ENCODE measurements at regions of chr12 and their contacts with region 1.

Region 1: DNA sequence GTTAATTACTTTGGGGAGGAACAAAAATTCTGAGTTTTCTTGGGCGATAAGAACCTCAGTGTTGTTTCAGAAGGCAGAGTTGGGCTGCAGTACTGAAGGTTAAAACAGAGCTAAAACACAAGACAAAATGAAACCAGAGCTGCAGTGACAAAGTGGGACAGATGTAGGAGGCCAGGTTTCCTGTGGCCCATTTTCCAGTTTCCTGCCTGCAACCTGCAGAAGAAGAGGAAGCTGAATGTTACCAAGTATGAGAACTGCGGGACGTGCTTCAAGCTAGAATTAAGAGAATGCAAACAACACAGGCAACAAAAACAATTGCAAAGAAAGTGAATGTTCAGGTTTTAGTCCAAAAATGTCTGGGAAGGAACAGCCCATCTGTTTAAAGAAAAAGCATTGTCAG is 17.8 kb downstream of the ELK3 start:
- H3K4me3 Mint-ChIP-seq: no peak overlapping the region
- H3K27ac Mint-ChIP-seq: no peak overlapping the region
- H3K4me1 Mint-ChIP-seq: peaks cover 76% of the 10 kb centered on the region
- H3K27me3 Mint-ChIP-seq: no peaks in the 10 kb centered on the region

Region 2: GRCh38 chr12:96015672-96016071 is 196.3 kb before region 1 on chr12:
- intact Hi-C with region 1: loop called (anchors 5 kb)
- H3K4me3 Mint-ChIP-seq: no peak overlapping the region
- H3K27ac Mint-ChIP-seq: no peak overlapping the region
- H3K4me1 Mint-ChIP-seq: peaks cover 12% of the 10 kb centered on the region
- H3K27me3 Mint-ChIP-seq: no peaks in the 10 kb centered on the region

Region 3: GRCh38 chr12:96094201-96094600 is 117.8 kb before region 1 on chr12:
- intact Hi-C with region 1: no loop called
- H3K4me3 Mint-ChIP-seq: no peak overlapping the region
- H3K27ac Mint-ChIP-seq: no peak overlapping the region
- H3K4me1 Mint-ChIP-seq: peaks cover 18% of the 10 kb centered on the region
- H3K27me3 Mint-ChIP-seq: no peaks in the 10 kb centered on the region

Region 4: DNA sequence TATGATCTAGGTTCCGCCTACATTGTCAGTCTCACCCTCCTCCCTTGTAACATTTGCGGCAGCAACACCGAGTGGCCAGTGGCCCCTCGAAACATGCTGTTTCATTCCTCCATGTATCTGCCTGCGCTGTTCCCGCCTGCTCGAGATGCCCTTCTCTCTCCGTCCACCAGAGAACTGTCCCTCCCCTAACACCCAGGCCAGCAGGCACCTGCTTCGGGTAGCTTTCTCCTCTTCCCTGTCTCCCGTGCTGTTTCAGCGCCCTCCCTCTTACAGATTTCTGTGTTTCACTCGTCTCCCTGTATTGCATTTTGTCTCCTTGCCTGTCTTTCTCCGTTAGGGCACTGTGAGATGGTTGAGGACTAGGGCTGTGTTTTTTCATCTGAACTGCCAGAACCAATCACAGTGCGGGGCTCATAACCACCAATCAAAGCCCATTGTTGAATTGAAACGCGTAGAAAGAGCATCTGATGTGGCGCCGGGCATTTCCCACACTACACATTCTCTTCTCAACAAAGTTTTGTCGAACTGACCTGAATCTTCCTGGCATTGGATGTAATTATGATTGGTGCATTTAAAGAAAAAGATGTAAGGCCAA is 58.8 kb before region 1 on chr12:
- intact Hi-C with region 1: no loop called
- H3K4me3 Mint-ChIP-seq: no peak overlapping the region
- H3K27ac Mint-ChIP-seq: no peak overlapping the region
- H3K4me1 Mint-ChIP-seq: no peaks in the 10 kb centered on the region
- H3K27me3 Mint-ChIP-seq: peaks cover 2% of the 10 kb centered on the region

Region 5: GRCh38 chr12:96375841-96376604 is 164.0 kb after region 1 on chr12:
- intact Hi-C with region 1: no loop called
- H3K4me3 Mint-ChIP-seq: peak overlapping the region; percentile 26
- H3K27ac Mint-ChIP-seq: peak overlapping the region; percentile 43
- H3K4me1 Mint-ChIP-seq: peaks cover 47% of the 10 kb centered on the region
- H3K27me3 Mint-ChIP-seq: no peaks in the 10 kb centered on the region

Region 6: DNA sequence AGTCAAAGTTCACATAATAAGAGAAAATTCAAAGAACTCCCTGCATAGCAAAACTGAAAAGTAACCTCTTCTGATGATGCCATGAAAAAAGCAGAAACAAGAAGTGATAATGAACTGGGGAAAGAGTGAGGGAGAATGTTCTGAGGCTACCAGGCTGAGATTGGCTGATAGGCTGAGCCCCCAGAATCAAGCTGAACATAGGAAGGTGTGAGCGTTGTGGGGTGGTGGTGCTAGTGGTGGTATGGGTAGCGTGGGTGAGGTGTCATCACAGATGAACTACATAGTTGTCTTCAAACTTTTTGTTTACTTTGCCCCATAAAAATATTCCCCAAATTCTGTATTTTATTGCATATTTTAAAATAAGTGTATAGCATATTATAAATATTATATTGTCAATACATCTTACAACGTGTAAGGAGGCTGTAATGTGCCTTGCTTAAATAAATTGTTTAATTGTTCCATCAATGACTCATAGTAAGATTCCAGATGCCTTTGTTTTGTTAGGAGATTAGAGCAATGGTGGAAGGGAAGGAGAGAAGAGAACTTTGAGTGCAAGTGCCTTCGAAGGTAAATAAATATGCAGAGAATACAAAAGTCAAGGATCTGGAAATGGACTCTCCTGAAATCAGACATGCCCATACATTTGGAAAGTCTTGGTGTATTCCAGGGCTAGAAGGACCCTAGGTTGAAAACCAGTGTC is 261.6 kb after region 1 on chr12:
- intact Hi-C with region 1: no loop called
- H3K4me3 Mint-ChIP-seq: no peak overlapping the region
- H3K27ac Mint-ChIP-seq: no peak overlapping the region
- H3K4me1 Mint-ChIP-seq: no peaks in the 10 kb centered on the region
- H3K27me3 Mint-ChIP-seq: peaks cover 2% of the 10 kb centered on the region